ENCODE measurements at regions of chr2 and their contacts with region 1.

Region 1: GRCh38 chr2:181466661-181467576 is 9.7 kb downstream of the ITGA4 start:
- DNase-seq: peak; percentile 75
- ATAC-seq: no peak

Region 2: GRCh38 chr2:180969124-180969523 is 497.8 kb before region 1 on chr2:
- intact Hi-C with region 1: loop called (anchors 5 kb)
- DNase-seq: no peak
- ATAC-seq: no peak